ENCODE measurements at regions of chr5 and their contacts with region 1.

Region 1: GRCh38 chr5:138449501-138450239 is 10.8 kb downstream of the REEP2 start:
- DNase-seq: peak; percentile 15 to 86 (median 62)
- ATAC-seq: peak; percentile 76 to 93 (median 86)
- H3K4me3 ChIP-seq: no peak overlapping the region
- H3K4me3 Mint-ChIP-seq: no peak overlapping the region
- H3K27ac ChIP-seq: no peak overlapping the region
- H3K27ac Mint-ChIP-seq: peak overlapping the region in 1 of 2 donors; percentile 52
- H3K4me1 ChIP-seq: peaks cover 3 to 12% of the 10 kb centered on the region in 2 experiments
- H3K4me1 Mint-ChIP-seq: peaks cover 5 to 8% (median 5%) of the 10 kb centered on the region in 3 donors
- H3K27me3 ChIP-seq: peaks cover 0 to 29% of the 10 kb centered on the region in 2 experiments
- H3K27me3 Mint-ChIP-seq: no peaks in the 10 kb centered on the region

Region 2: GRCh38 chr5:138331449-138332368 is 118.0 kb before region 1 on chr5 and contains the start of gene CDC25C:
- CTCF ChIA-PET with region 1: interaction called in 1 of 2 experiments, 13 read pairs
- POLR2A ChIA-PET with region 1: no interaction called
- DNase-seq: peak; percentile 86 to 100 (median 97)
- ATAC-seq: peak; percentile 99 to 100 (median 100)
- H3K4me3 ChIP-seq: peak within 1 kb of the TSS; percentile 63 to 87
- H3K4me3 Mint-ChIP-seq: peak within 1 kb of the TSS; percentile 80 to 82 (median 80)
- H3K27ac ChIP-seq: peak within 1 kb of the TSS; percentile 31
- H3K27ac Mint-ChIP-seq: peak within 1 kb of the TSS; percentile 26 to 66
- H3K4me1 ChIP-seq: peaks cover 6 to 15% of the 10 kb centered on the region in 2 experiments
- H3K4me1 Mint-ChIP-seq: peaks cover 18 to 19% (median 19%) of the 10 kb centered on the region in 3 donors
- H3K27me3 ChIP-seq: no peaks in the 10 kb centered on the region
- H3K27me3 Mint-ChIP-seq: no peaks in the 10 kb centered on the region
- total RNA-seq, gene CDC25C: 0.23 TPM in 1 of 5 donors, not detected in the others

Region 3: GRCh38 chr5:138498376-138498775 is 48.7 kb after region 1 on chr5:
- CTCF ChIA-PET with region 1: interaction called, 41 to 43 read pairs
- POLR2A ChIA-PET with region 1: no interaction called
- DNase-seq: no peak
- ATAC-seq: no peak
- H3K4me3 ChIP-seq: no peak overlapping the region
- H3K4me3 Mint-ChIP-seq: no peak overlapping the region
- H3K27ac ChIP-seq: no peak overlapping the region
- H3K27ac Mint-ChIP-seq: no peak overlapping the region
- H3K4me1 ChIP-seq: no peaks in the 10 kb centered on the region
- H3K4me1 Mint-ChIP-seq: no peaks in the 10 kb centered on the region
- H3K27me3 ChIP-seq: peaks cover 0 to 12% of the 10 kb centered on the region in 2 experiments
- H3K27me3 Mint-ChIP-seq: peaks cover 0 to 3% of the 10 kb centered on the region in 2 donors

Region 4: DNA sequence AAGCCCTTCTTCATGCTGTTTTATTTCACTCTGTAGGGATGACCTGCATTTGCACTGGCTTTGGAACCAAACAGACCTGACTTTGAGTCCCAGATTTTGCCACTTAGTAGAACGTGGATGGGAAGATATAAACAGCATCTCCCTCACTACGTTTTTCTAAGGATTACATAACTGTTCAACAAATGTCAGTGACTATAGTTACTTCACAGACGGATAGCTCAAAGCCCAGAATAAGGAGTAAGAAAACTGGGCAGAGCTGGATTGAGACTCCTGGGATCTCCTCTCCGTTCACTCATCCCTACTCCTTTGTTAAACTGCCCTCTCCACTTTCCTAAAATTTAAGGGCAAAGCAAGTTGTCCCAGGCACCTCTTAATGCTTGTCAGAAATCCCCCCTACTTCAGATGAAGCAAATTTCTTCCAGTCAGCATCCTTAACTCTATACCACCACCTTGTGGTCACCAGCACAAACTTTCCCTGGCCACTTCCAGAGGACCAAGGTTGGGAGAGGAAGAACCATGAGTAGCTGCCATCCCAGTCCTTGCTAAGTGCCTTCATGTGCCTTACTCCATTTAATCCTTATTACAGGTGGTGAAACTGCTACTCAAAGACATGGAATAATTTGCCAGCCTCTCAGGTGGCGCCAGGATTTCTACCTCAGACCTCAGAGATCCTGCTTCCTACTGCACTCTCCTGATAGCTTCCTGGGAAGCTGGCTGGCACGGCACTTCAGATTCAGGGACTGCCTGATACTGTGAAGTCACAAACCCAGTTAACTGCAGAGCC is 54.0 kb after region 1 on chr5:
- CTCF ChIA-PET with region 1: interaction called, 41 to 43 read pairs
- POLR2A ChIA-PET with region 1: interaction called in 1 of 2 experiments, 4 read pairs
- DNase-seq: peak in 15 of 35 experiments; percentile 12 to 78 (median 22)
- ATAC-seq: peak; percentile 51 to 74 (median 68)
- H3K4me3 ChIP-seq: no peak overlapping the region
- H3K4me3 Mint-ChIP-seq: no peak overlapping the region
- H3K27ac ChIP-seq: no peak overlapping the region
- H3K27ac Mint-ChIP-seq: peak overlapping the region in 1 of 2 donors; percentile 18
- H3K4me1 ChIP-seq: no peaks in the 10 kb centered on the region
- H3K4me1 Mint-ChIP-seq: peaks cover 0 to 2% (median 0%) of the 10 kb centered on the region in 3 donors
- H3K27me3 ChIP-seq: no peaks in the 10 kb centered on the region
- H3K27me3 Mint-ChIP-seq: no peaks in the 10 kb centered on the region

Measured in T-cell (primary cell).